B cell (primary cell): ENCODE measurements at regions of chr19 and their contacts with region 1.

Region 1: GRCh38 chr19:32339988-32340874 is 5.2 kb upstream of the ZNF507 start:
- DNase-seq: peak; percentile 57
- ATAC-seq: peak; percentile 82
- H3K4me3 ChIP-seq: no peak overlapping the region
- H3K4me3 Mint-ChIP-seq: no peak overlapping the region
- H3K27ac ChIP-seq: no peak overlapping the region
- H3K27ac Mint-ChIP-seq: no peak overlapping the region
- H3K4me1 ChIP-seq: peaks cover 0 to 4% of the 10 kb centered on the region in 2 donors
- H3K4me1 Mint-ChIP-seq: no peaks in the 10 kb centered on the region
- H3K27me3 ChIP-seq: peaks cover 0 to 6% (median 0%) of the 10 kb centered on the region in 4 experiments
- H3K27me3 Mint-ChIP-seq: no peaks in the 10 kb centered on the region
- CTCF ChIP-seq: peak; percentile 80

Region 2: GRCh38 chr19:32265995-32266394 is 74.2 kb before region 1 on chr19:
- CTCF ChIA-PET with region 1: no interaction called
- POLR2A ChIA-PET with region 1: no interaction called
- intact Hi-C with region 1: no loop called
- DNase-seq: no peak
- ATAC-seq: no peak
- H3K4me3 ChIP-seq: no peak overlapping the region
- H3K4me3 Mint-ChIP-seq: no peak overlapping the region
- H3K27ac ChIP-seq: no peak overlapping the region
- H3K27ac Mint-ChIP-seq: no peak overlapping the region
- H3K4me1 ChIP-seq: no peaks in the 10 kb centered on the region
- H3K4me1 Mint-ChIP-seq: no peaks in the 10 kb centered on the region
- H3K27me3 ChIP-seq: no peaks in the 10 kb centered on the region
- H3K27me3 Mint-ChIP-seq: peaks cover 4% of the 10 kb centered on the region
- CTCF ChIP-seq: no peak

Region 3: GRCh38 chr19:32357720-32358119 is 17.5 kb after region 1 on chr19:
- CTCF ChIA-PET with region 1: interaction called, 12 read pairs
- POLR2A ChIA-PET with region 1: no interaction called
- intact Hi-C with region 1: loop called (anchors 2 kb)
- DNase-seq: no peak
- ATAC-seq: no peak
- H3K4me3 ChIP-seq: no peak overlapping the region
- H3K4me3 Mint-ChIP-seq: no peak overlapping the region
- H3K27ac ChIP-seq: no peak overlapping the region
- H3K27ac Mint-ChIP-seq: no peak overlapping the region
- H3K4me1 ChIP-seq: peaks cover 16 to 20% of the 10 kb centered on the region in 2 donors
- H3K4me1 Mint-ChIP-seq: peaks cover 26% of the 10 kb centered on the region
- H3K27me3 ChIP-seq: no peaks in the 10 kb centered on the region
- H3K27me3 Mint-ChIP-seq: no peaks in the 10 kb centered on the region
- CTCF ChIP-seq: no peak